Naive thymus-derived CD4-positive, alpha-beta T cell (primary cell): ENCODE measurements at regions of chr13 and their contacts with region 1.

Region 1: GRCh38 chr13:21476893-21477472 is 17.9 kb upstream of the ZDHHC20 start:
- DNase-seq: peak; percentile 59 to 82 (median 65)
- ATAC-seq: peak; percentile 94
- H3K4me3 ChIP-seq: peak overlapping the region; percentile 50
- H3K4me3 Mint-ChIP-seq: peak overlapping the region; percentile 74 to 87 (median 82)
- H3K27ac ChIP-seq: peak overlapping the region; percentile 24
- H3K27ac Mint-ChIP-seq: peak overlapping the region in 8 of 9 donors; percentile 22 to 86 (median 58)
- H3K4me1 ChIP-seq: no peaks in the 10 kb centered on the region
- H3K4me1 Mint-ChIP-seq: peaks cover 7 to 17% (median 11%) of the 10 kb centered on the region in 7 donors
- H3K27me3 ChIP-seq: no peaks in the 10 kb centered on the region
- H3K27me3 Mint-ChIP-seq: peaks cover 0 to 5% (median 0%) of the 10 kb centered on the region in 5 donors

Region 2: DNA sequence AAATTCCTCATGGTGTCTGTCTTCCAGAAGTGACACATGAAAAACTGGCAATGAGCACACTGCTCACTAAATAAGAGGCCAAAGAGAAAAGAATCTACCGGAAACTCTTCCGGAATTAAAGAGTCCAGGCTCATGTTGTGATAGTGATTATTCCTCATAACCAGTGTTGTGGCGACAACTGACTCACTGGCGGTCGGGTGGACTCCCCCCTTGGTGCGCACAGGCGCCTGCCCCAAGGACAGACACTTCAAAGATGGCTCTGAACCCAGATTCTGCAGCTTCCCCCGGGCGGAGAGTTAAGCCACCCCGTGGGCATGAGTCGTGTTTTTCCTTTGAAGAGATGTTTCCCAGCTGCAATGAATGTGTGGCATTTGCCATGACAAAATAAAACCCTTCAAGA is 763.2 kb before region 1 on chr13:
- CTCF ChIA-PET with region 1: no interaction called
- POLR2A ChIA-PET with region 1: no interaction called
- intact Hi-C with region 1: loop called in 1 of 2 experiments (anchors 1 kb)
- DNase-seq: no peak
- ATAC-seq: no peak
- H3K4me3 ChIP-seq: no peak overlapping the region
- H3K4me3 Mint-ChIP-seq: no peak overlapping the region
- H3K27ac ChIP-seq: no peak overlapping the region
- H3K27ac Mint-ChIP-seq: no peak overlapping the region
- H3K4me1 ChIP-seq: no peaks in the 10 kb centered on the region
- H3K4me1 Mint-ChIP-seq: peaks cover 5 to 13% (median 8%) of the 10 kb centered on the region in 7 donors
- H3K27me3 ChIP-seq: no peaks in the 10 kb centered on the region
- H3K27me3 Mint-ChIP-seq: peaks cover 0 to 7% (median 6%) of the 10 kb centered on the region in 5 donors

Region 3: GRCh38 chr13:20940083-20940880 is 536.7 kb before region 1 on chr13:
- CTCF ChIA-PET with region 1: interaction called, 13 read pairs
- POLR2A ChIA-PET with region 1: no interaction called
- intact Hi-C with region 1: loop called in 1 of 2 experiments (anchors 1 kb)
- DNase-seq: no peak
- ATAC-seq: no peak
- H3K4me3 ChIP-seq: no peak overlapping the region
- H3K4me3 Mint-ChIP-seq: no peak overlapping the region
- H3K27ac ChIP-seq: no peak overlapping the region
- H3K27ac Mint-ChIP-seq: no peak overlapping the region
- H3K4me1 ChIP-seq: no peaks in the 10 kb centered on the region
- H3K4me1 Mint-ChIP-seq: peaks cover 0 to 7% (median 3%) of the 10 kb centered on the region in 7 donors
- H3K27me3 ChIP-seq: no peaks in the 10 kb centered on the region
- H3K27me3 Mint-ChIP-seq: peaks cover 16 to 43% (median 22%) of the 10 kb centered on the region in 5 donors

Region 4: GRCh38 chr13:21402586-21403228 is 74.3 kb before region 1 on chr13:
- CTCF ChIA-PET with region 1: interaction called, 4 read pairs
- POLR2A ChIA-PET with region 1: no interaction called
- intact Hi-C with region 1: loop called (anchors 1 to 5 kb)
- DNase-seq: no peak
- ATAC-seq: no peak
- H3K4me3 ChIP-seq: no peak overlapping the region
- H3K4me3 Mint-ChIP-seq: no peak overlapping the region
- H3K27ac ChIP-seq: no peak overlapping the region
- H3K27ac Mint-ChIP-seq: peak overlapping the region in 8 of 9 donors; percentile 1 to 78 (median 56)
- H3K4me1 ChIP-seq: peaks cover 6 to 13% of the 10 kb centered on the region in 2 donors
- H3K4me1 Mint-ChIP-seq: peaks cover 19 to 56% (median 47%) of the 10 kb centered on the region in 7 donors
- H3K27me3 ChIP-seq: no peaks in the 10 kb centered on the region
- H3K27me3 Mint-ChIP-seq: no peaks in the 10 kb centered on the region